ENCODE measurements at regions of chr3 and their contacts with region 1.

Region 1: GRCh38 chr3:129316131-129317013 is 37.7 kb downstream of the HMCES start:
- DNase-seq: peak; percentile 78 to 82
- ATAC-seq: peak; percentile 25 to 63; a peak in 4 of 6 replicates
- H3K4me3 ChIP-seq: peak overlapping the region; percentile 97
- H3K27ac ChIP-seq: peak overlapping the region; percentile 93 to 99
- H3K4me1 ChIP-seq: peaks cover 15% of the 10 kb centered on the region
- CTCF ChIP-seq: peak; percentile 59
- EP300 ChIP-seq: no peak
- POLR2A ChIP-seq: peak; percentile 99
- RAD21 ChIP-seq: peak; percentile 28 to 31; a peak in 2 of 5 replicates

Region 2: GRCh38 chr3:129026728-129027543 is 289.4 kb before region 1 on chr3:
- CTCF ChIA-PET with region 1: no interaction called
- POLR2A ChIA-PET with region 1: no interaction called
- DNase-seq: peak; percentile 88 to 93
- ATAC-seq: peak; percentile 99 to 100
- H3K4me3 ChIP-seq: peak overlapping the region; percentile 54
- H3K27ac ChIP-seq: peak overlapping the region; percentile 77 to 89
- H3K4me1 ChIP-seq: no peaks in the 10 kb centered on the region
- CTCF ChIP-seq: peak; percentile 61
- EP300 ChIP-seq: no peak
- POLR2A ChIP-seq: peak; percentile 31
- RAD21 ChIP-seq: 0 out of 5 replicates have a peak, but pooled peaks of 1 of the 2 experiments have one; percentile 18

Region 3: GRCh38 chr3:129305592-129306091 is 10.7 kb before region 1 on chr3:
- CTCF ChIA-PET with region 1: interaction called, 11 read pairs
- POLR2A ChIA-PET with region 1: no interaction called
- DNase-seq: no peak
- ATAC-seq: no peak
- H3K4me3 ChIP-seq: no peak overlapping the region
- H3K27ac ChIP-seq: no peak overlapping the region
- H3K4me1 ChIP-seq: peaks cover 8% of the 10 kb centered on the region
- CTCF ChIP-seq: no peak
- EP300 ChIP-seq: no peak
- POLR2A ChIP-seq: no peak
- RAD21 ChIP-seq: no peak

Region 4: DNA sequence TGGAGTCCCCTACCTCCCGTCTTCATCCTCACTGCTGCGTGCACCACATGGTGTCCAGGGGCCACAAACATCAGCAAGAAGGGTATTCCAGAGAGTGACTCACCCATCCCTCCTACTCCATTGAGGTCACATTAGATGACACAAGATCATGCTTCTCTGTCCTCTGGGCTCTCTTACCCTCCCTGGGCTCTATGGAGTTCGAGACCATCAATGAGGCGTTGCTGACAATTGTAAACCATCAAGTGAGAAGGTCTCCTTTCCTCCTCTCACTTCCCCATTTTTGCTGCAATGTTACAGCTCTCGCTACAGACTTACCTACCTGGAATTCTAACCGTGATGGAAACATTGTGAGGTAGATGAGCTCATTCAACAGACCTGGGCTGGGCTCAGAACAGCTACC is 14.0 kb after region 1 on chr3:
- CTCF ChIA-PET with region 1: interaction called, 19 read pairs
- POLR2A ChIA-PET with region 1: interaction called, 5 read pairs
- DNase-seq: no peak
- ATAC-seq: no peak
- H3K4me3 ChIP-seq: no peak overlapping the region
- H3K27ac ChIP-seq: no peak overlapping the region
- H3K4me1 ChIP-seq: no peaks in the 10 kb centered on the region
- CTCF ChIP-seq: no peak
- EP300 ChIP-seq: no peak
- POLR2A ChIP-seq: no peak
- RAD21 ChIP-seq: no peak

Region 5: DNA sequence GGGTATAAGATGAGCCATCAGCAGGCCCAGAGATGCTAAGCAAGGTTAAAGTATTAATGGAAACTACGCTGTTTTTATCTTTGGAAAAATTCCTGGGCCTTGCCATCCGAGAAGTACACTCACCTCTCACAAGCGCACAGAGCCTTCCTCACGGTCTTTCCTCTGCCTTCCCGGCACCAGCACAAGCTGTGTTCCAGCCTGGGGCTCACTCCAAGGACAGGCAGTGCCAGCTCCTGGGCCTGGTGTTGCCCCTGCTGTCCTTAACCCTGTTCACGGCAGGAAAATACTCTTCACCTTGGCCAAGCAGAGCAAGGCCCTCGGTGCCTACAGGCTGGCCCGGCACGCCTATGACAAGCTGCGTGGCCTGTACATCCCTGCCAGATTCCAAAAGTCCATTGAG is 197.7 kb after region 1 on chr3:
- CTCF ChIA-PET with region 1: no interaction called
- POLR2A ChIA-PET with region 1: no interaction called
- DNase-seq: no peak
- ATAC-seq: no peak
- H3K4me3 ChIP-seq: no peak overlapping the region
- H3K27ac ChIP-seq: no peak overlapping the region
- H3K4me1 ChIP-seq: no peaks in the 10 kb centered on the region
- CTCF ChIP-seq: no peak
- EP300 ChIP-seq: no peak
- POLR2A ChIP-seq: no peak
- RAD21 ChIP-seq: no peak

Measured in A549 (cell line).